ENCODE measurements at regions of chr14 and their contacts with region 1.

Region 1: DNA sequence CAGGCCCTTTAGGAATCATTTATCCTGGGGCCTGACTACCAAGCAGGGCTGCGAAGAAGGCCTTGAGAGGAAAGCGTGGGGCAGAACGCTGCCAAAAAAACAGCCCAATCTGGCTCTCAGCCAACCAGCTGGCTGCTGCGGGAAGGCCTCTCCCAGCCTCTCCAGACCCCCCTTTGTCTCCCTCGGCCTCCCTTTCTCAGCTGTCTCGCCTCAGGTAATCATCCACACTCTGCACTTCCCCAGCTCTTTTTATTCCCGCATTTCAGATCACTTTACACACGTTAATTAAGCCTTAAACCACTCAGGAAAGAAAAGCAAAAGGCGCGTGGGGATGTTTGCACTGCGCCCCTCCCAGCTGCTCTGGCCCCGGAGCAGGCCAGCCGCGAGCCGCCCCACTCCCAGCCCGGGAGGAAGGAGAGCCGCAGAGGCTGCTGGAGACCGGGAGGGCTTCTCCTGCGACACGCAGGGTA is 208.2 kb upstream of the FOXN3 start:
- DNase-seq: no peak
- ATAC-seq: no peak
- H3K4me3 ChIP-seq: no peak overlapping the region
- H3K4me3 Mint-ChIP-seq: no peak overlapping the region
- H3K27ac ChIP-seq: no peak overlapping the region
- H3K27ac Mint-ChIP-seq: no peak overlapping the region
- H3K4me1 ChIP-seq: peaks cover 20 to 25% of the 10 kb centered on the region in 2 donors
- H3K4me1 Mint-ChIP-seq: peaks cover 39% of the 10 kb centered on the region
- H3K27me3 ChIP-seq: no peaks in the 10 kb centered on the region
- H3K27me3 Mint-ChIP-seq: no peaks in the 10 kb centered on the region
- CTCF ChIP-seq: no peak

Region 2: DNA sequence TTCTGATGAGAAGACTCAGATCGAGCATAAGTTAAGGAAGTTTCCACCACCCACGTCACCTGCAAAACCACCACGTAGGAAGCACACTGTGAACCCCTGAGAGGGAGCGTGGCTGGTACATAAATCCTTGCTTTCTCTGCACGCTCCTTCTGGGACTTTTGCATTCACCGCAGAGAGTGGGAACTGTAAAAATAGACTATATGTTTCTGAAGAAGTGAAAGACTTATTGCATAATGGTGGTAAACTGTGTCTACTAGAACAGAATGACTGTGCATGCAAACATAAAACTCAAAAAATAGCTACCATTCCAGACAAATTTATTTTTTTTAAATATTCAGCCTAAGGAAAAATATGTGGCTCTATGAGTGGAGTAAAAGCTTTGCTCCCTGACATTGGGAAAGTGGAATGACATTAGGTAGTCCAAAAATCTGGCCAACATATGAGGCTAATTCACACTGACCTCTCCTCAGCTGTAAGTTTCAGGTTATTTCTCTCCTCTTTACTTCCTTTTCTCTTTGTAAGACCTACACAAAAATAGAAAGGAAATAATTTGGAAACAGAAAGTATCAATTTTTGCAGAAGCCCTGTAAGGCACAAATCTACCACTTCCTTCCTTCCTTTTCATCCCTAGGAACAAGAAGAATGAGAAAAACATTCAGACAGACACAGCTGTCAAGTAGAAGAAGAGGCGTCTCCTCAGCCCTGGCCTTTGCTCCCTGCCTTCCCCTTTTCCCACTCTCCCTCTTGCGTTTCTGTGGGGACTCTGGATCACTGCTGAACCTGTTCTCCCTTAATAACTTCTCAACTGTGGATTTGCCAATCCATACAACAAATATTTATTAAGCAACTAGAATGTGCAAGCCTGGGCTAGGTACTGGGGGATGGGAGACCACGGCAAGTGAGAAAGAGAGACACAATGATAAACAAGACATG is 56.1 kb after region 1 on chr14:
- CTCF ChIA-PET with region 1: no interaction called
- POLR2A ChIA-PET with region 1: interaction called, 3 read pairs
- intact Hi-C with region 1: loop called (anchors 10 kb)
- DNase-seq: peak; percentile 41
- ATAC-seq: peak; percentile 51
- H3K4me3 ChIP-seq: peak overlapping the region in 2 of 5 experiments; percentile 18 to 38
- H3K4me3 Mint-ChIP-seq: peak overlapping the region; percentile 62
- H3K27ac ChIP-seq: peak overlapping the region; percentile 45 to 72
- H3K27ac Mint-ChIP-seq: peak overlapping the region; percentile 74
- H3K4me1 ChIP-seq: peaks cover 28 to 30% of the 10 kb centered on the region in 2 donors
- H3K4me1 Mint-ChIP-seq: peaks cover 28% of the 10 kb centered on the region
- H3K27me3 ChIP-seq: no peaks in the 10 kb centered on the region
- H3K27me3 Mint-ChIP-seq: no peaks in the 10 kb centered on the region
- CTCF ChIP-seq: no peak

Measured in B cell (primary cell).